Activated T-helper 2 cell treated with anti-CD3 and anti-CD28 coated beads, Interferon-gamma antibody, Interleukin-2, Interleukin-4, amounts not matched to agents 10 μg/mL and 5 μg/mL and 100 μg/mL, durations not matched to agents 14 hours and 24 hours and 36 hours (primary cell): ENCODE measurements at regions of chr4 and their contacts with region 1.

Region 1: DNA sequence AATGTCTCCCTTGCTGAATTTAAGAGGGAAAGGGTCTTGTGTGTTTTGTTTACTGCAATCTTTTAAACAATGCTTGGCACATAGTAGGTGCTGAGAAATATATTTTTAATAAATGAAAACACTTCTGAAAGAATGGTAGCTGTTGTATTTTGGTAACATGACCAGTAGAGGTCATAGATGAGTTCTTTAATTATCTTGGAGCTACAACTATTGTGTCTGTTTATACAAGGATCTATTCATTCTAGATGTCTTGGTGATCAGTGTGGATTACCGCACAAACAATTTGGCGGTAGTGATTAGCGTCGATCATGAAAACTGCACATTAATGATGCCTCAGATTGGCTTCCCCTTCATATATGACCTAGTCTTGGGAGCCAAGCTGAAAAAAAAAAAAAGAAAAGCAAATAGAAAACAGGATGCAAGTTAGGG is 21.4 kb upstream of the SCRG1 start:
- DNase-seq: no peak
- H3K4me3 Mint-ChIP-seq: no peak overlapping the region
- H3K27ac Mint-ChIP-seq: no peak overlapping the region
- H3K4me1 Mint-ChIP-seq: peaks cover 4% of the 10 kb centered on the region
- H3K27me3 Mint-ChIP-seq: peaks cover 2% of the 10 kb centered on the region

Region 2: GRCh38 chr4:173013232-173013930 is 407.0 kb before region 1 on chr4:
- intact Hi-C with region 1: loop called (anchors 2 kb)
- DNase-seq: no peak
- H3K4me3 Mint-ChIP-seq: no peak overlapping the region
- H3K27ac Mint-ChIP-seq: no peak overlapping the region
- H3K4me1 Mint-ChIP-seq: no peaks in the 10 kb centered on the region
- H3K27me3 Mint-ChIP-seq: peaks cover 9% of the 10 kb centered on the region

Region 3: DNA sequence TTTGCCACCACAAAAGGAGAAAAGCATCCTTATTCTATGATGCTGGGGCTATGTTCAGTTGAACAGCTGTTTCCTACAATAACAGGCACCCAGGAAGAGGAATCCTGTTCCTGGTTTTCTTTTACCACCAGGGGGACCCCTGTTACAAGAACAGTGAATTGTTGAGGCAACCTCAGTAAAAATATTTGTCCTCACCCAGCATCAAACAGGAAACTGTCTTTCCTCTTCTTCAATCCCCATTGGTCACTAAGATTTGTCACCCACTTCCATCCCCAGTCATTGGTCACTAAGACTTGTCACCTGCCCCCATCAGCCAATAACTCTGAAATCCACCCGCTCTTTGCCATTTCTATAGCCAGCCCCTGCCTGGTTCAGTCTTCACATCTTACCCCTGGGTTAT is 395.2 kb before region 1 on chr4:
- intact Hi-C with region 1: loop called (anchors 5 kb)
- DNase-seq: no peak
- H3K4me3 Mint-ChIP-seq: no peak overlapping the region
- H3K27ac Mint-ChIP-seq: no peak overlapping the region
- H3K4me1 Mint-ChIP-seq: peaks cover 5% of the 10 kb centered on the region
- H3K27me3 Mint-ChIP-seq: peaks cover 4% of the 10 kb centered on the region

Region 4: GRCh38 chr4:173288296-173288695 is 132.0 kb before region 1 on chr4:
- intact Hi-C with region 1: loop called (anchors 1 kb)
- DNase-seq: peak; percentile 41
- H3K4me3 Mint-ChIP-seq: peak overlapping the region; percentile 74
- H3K27ac Mint-ChIP-seq: peak overlapping the region; percentile 33
- H3K4me1 Mint-ChIP-seq: peaks cover 21% of the 10 kb centered on the region
- H3K27me3 Mint-ChIP-seq: no peaks in the 10 kb centered on the region

Region 5: DNA sequence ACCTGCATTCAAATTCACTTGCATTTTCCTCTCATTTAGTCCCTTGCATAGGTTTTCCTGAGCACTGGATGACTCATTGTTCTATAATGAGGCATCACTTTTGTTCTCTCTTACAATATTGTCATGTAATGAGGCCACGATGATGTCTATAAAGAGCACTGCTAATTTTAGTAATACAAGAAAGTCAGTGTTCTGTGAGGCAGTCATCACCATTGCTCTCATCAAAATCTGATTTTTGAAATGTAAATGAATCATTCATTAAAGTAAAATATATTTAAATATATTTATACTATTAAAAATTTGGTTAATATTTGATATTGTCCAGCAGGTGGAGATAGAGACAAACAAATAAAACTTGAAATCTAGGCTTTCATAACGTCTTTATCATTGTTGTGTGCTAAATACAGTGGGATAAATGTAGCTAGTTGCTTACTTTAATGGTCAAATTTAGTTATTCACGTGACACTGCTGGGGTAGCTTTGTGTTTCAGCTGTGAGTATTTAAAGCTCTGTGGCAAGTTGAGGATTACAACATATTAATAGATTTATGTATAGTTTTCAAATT is 101.6 kb before region 1 on chr4:
- intact Hi-C with region 1: loop called (anchors 1 kb)
- DNase-seq: no peak
- H3K4me3 Mint-ChIP-seq: no peak overlapping the region
- H3K27ac Mint-ChIP-seq: no peak overlapping the region
- H3K4me1 Mint-ChIP-seq: peaks cover 6% of the 10 kb centered on the region
- H3K27me3 Mint-ChIP-seq: no peaks in the 10 kb centered on the region

Region 6: GRCh38 chr4:173494013-173494970 is 74.0 kb after region 1 on chr4:
- intact Hi-C with region 1: loop called (anchors 1 kb)
- DNase-seq: peak; percentile 53
- H3K4me3 Mint-ChIP-seq: peak overlapping the region; percentile 81
- H3K27ac Mint-ChIP-seq: no peak overlapping the region
- H3K4me1 Mint-ChIP-seq: peaks cover 18% of the 10 kb centered on the region
- H3K27me3 Mint-ChIP-seq: peaks cover 29% of the 10 kb centered on the region